Mammary epithelial cell (primary cell): ENCODE measurements at regions of chr12 and their contacts with region 1.

Region 1: GRCh38 chr12:56062996-56063395 is 17.0 kb upstream of the ERBB3 start:
- DNase-seq: no peak
- H3K4me3 ChIP-seq: no peak overlapping the region
- H3K27ac ChIP-seq: no peak overlapping the region
- H3K4me1 ChIP-seq: peaks cover 6% of the 10 kb centered on the region
- H3K27me3 ChIP-seq: no peaks in the 10 kb centered on the region
- CTCF ChIP-seq: no peak

Region 2: DNA sequence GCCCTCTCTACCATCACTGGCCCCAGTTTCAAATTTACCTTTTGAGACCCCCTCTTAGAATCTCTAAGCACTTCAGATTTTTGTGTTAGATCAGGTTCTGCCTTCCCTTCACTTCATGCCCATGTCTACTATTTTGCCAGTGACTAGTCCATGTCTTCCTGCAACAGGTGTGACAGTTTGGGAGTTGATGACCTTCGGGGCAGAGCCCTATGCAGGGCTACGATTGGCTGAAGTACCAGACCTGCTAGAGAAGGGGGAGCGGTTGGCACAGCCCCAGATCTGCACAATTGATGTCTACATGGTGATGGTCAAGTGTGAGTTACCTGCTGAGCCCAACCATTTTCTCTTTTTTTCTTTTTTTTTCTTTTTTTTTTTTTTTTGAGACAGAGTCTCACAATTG is 35.6 kb after region 1 on chr12:
- CTCF ChIA-PET with region 1: no interaction called
- dilution Hi-C with region 1: loop called (anchors 5 kb)
- in situ Hi-C with region 1: no loop called
- intact Hi-C with region 1: no loop called
- DNase-seq: no peak
- H3K4me3 ChIP-seq: no peak overlapping the region
- H3K27ac ChIP-seq: no peak overlapping the region
- H3K4me1 ChIP-seq: peaks cover 8% of the 10 kb centered on the region
- H3K27me3 ChIP-seq: no peaks in the 10 kb centered on the region
- CTCF ChIP-seq: no peak